ENCODE measurements at regions of chr14 and their contacts with region 1.

Region 1: DNA sequence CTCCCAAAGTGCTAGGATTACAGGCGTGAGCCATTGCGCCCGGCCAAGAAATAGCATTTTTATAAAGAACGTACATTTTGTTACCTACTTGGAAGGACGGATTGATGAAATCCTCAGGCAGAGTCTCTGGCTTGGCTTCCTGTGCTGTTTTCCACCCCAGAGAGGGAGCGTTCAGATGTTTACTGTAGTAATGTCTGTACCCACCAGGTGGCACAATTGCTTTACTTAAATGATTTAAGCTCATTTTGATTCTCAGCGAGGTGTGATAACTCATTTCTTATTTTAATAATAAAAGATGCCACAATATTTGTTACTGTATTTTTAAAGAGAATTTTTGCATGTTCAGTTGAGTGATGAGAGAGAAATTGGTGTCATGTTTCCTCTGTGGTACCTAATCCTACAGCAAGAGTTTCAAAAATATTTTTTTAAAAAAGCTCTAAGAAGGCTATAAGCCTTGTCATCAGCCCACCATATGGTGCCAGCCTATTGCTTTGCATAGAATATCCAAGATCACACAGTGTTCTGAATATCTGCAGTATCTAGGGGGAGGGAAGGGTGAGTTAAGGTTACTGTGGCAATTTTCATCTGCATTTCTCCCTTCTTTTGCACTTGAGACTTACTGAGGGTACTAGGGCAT is 82.6 kb upstream of the TRAF3 start:
- DNase-seq: peak; percentile 66
- CTCF ChIP-seq: peak; percentile 63

Region 2: GRCh38 chr14:102917469-102918211 is 223.0 kb after region 1 on chr14:
- in situ Hi-C with region 1: loop called (anchors 10 kb)
- DNase-seq: peak; percentile 87
- CTCF ChIP-seq: peak; percentile 72

Measured in GM13976 (cell line).